ENCODE measurements at regions of chr2 and their contacts with region 1.

Region 1: GRCh38 chr2:200713003-200713703 is 98.6 kb upstream of the BZW1 start:
- DNase-seq: peak; percentile 91
- ATAC-seq: peak; percentile 99
- H3K4me3 ChIP-seq: peak overlapping the region in 4 of 5 experiments; percentile 5 to 52 (median 16)
- H3K4me3 Mint-ChIP-seq: peak overlapping the region; percentile 83
- H3K27ac ChIP-seq: peak overlapping the region; percentile 82 to 93
- H3K27ac Mint-ChIP-seq: peak overlapping the region; percentile 98
- H3K4me1 ChIP-seq: peaks cover 5 to 6% of the 10 kb centered on the region in 2 donors
- H3K4me1 Mint-ChIP-seq: peaks cover 15% of the 10 kb centered on the region
- H3K27me3 ChIP-seq: no peaks in the 10 kb centered on the region
- H3K27me3 Mint-ChIP-seq: peaks cover 10% of the 10 kb centered on the region
- CTCF ChIP-seq: peak; percentile 83

Region 2: DNA sequence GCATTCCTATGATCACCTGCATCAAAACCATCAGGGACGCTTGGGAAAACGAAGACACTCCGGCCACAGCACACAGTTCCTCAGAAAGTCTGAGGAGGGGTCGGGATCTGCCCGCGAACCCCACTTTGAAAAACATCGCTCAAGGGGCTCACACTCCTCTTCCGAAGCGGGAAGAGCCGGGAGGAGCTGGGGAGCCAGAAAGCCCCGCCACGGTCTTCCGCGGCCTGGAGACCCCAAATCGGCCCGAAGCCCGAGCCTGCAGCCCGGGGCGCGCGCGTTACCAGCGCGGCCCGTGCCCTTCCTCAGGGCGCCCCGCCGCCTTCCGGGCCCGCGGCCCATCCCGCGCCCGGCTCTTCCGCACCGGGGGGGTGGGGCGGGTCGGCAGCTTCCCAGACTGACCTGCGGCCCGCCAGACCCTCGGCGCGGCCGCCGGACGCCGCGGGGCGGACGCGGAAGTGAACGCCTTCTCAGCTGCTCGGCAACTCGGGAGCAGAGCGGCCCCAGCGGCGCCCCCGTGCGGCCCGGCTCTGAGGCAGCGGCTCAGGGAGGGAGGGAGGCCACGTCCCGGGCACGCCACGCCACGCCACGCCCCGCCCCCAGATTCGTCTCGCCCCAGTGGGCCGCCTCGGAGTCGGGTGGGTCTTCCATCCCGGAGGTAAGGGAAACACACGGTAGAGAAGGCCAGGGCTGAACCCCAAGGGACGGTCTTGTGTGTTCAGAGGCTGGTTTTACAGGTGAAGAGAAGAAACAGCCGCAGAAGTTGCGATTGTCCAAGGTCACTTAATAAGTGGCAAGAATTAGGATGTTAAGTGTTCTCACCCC is 203.3 kb before region 1 on chr2 and contains the start of gene KCTD18:
- CTCF ChIA-PET with region 1: no interaction called
- POLR2A ChIA-PET with region 1: no interaction called
- intact Hi-C with region 1: loop called (anchors 1 kb)
- DNase-seq: peak; percentile 91
- ATAC-seq: peak; percentile 100
- H3K4me3 ChIP-seq: peak within 1 kb of the TSS; percentile 64 to 81 (median 66)
- H3K4me3 Mint-ChIP-seq: peak within 1 kb of the TSS; percentile 95
- H3K27ac ChIP-seq: peak within 1 kb of the TSS; percentile 49 to 79
- H3K27ac Mint-ChIP-seq: peak within 1 kb of the TSS; percentile 92
- H3K4me1 ChIP-seq: peaks cover 15 to 21% of the 10 kb centered on the region in 2 donors
- H3K4me1 Mint-ChIP-seq: peaks cover 28% of the 10 kb centered on the region
- H3K27me3 ChIP-seq: peaks cover 0 to 13% (median 13%) of the 10 kb centered on the region in 4 experiments
- H3K27me3 Mint-ChIP-seq: peaks cover 4% of the 10 kb centered on the region
- CTCF ChIP-seq: peak; percentile 83
- total RNA-seq, gene KCTD18: 20.2 and 21.3 TPM in 2 replicates

Region 3: DNA sequence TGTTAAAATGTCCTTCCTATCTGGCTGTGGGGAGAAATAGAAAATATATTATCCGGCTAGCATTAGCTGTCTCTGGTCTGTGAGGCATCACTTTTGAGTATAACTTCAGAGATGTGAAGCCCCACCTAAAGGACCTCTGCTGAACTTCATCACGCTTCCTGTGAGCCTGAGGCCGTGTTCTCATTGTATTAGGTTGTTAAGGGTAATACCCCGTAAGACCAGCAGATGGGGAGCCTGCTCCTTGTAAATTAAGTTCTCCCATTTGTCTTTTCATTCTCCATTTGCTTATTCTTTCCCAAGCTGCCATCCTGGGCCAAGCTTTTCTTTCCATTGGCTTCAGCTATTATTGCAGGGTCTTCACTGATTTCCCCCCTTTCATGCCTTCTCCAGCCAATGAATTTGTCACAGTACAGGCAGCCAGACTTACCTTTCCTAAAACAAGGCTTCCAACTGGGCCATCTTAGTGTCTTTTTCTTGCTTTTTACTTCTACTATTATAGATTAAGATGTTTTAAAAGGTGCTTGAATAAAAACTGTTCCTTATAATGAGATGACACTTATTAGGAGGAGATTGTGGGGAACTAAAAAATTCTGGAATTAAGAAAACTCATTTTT is 188.4 kb after region 1 on chr2:
- CTCF ChIA-PET with region 1: interaction called, 7 read pairs
- POLR2A ChIA-PET with region 1: no interaction called
- intact Hi-C with region 1: loop called (anchors 1 kb)
- DNase-seq: peak; percentile 86
- ATAC-seq: peak; percentile 100
- H3K4me3 ChIP-seq: no peak overlapping the region
- H3K4me3 Mint-ChIP-seq: no peak overlapping the region
- H3K27ac ChIP-seq: peak overlapping the region in 1 of 2 donors; percentile 40
- H3K27ac Mint-ChIP-seq: no peak overlapping the region
- H3K4me1 ChIP-seq: no peaks in the 10 kb centered on the region
- H3K4me1 Mint-ChIP-seq: peaks cover 4% of the 10 kb centered on the region
- H3K27me3 ChIP-seq: no peaks in the 10 kb centered on the region
- H3K27me3 Mint-ChIP-seq: no peaks in the 10 kb centered on the region
- CTCF ChIP-seq: peak; percentile 94

Region 4: GRCh38 chr2:201049455-201049854 is 336.3 kb after region 1 on chr2:
- CTCF ChIA-PET with region 1: no interaction called
- POLR2A ChIA-PET with region 1: no interaction called
- intact Hi-C with region 1: no loop called
- DNase-seq: no peak
- ATAC-seq: no peak
- H3K4me3 ChIP-seq: no peak overlapping the region
- H3K4me3 Mint-ChIP-seq: no peak overlapping the region
- H3K27ac ChIP-seq: no peak overlapping the region
- H3K27ac Mint-ChIP-seq: no peak overlapping the region
- H3K4me1 ChIP-seq: no peaks in the 10 kb centered on the region
- H3K4me1 Mint-ChIP-seq: peaks cover 2% of the 10 kb centered on the region
- H3K27me3 ChIP-seq: no peaks in the 10 kb centered on the region
- H3K27me3 Mint-ChIP-seq: no peaks in the 10 kb centered on the region
- CTCF ChIP-seq: no peak

Region 5: DNA sequence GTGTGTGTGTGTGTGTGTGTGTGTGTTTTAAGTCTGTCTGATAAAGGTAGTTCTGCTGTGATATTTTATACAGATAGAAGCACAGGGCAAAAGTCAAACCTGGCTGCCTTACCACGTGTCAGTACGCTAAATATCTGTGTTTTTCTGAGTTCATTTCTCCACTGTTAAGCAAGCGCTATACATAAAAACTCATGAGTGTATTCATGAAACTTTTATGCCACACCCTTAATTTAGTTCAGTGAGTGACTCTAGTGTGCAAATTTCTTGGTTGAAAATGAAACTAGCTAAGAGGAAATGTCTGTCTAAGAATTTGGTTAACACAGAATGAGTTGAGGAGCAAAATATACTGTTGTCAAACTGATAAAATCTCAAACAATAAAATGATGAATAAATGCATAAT is 480.9 kb after region 1 on chr2:
- CTCF ChIA-PET with region 1: no interaction called
- POLR2A ChIA-PET with region 1: no interaction called
- intact Hi-C with region 1: no loop called
- DNase-seq: peak; percentile 76
- ATAC-seq: peak; percentile 96
- H3K4me3 ChIP-seq: peak overlapping the region in 1 of 5 experiments; percentile 29
- H3K4me3 Mint-ChIP-seq: peak overlapping the region; percentile 80
- H3K27ac ChIP-seq: peak overlapping the region; percentile 31 to 50
- H3K27ac Mint-ChIP-seq: peak overlapping the region; percentile 89
- H3K4me1 ChIP-seq: peaks cover 46 to 55% of the 10 kb centered on the region in 2 donors
- H3K4me1 Mint-ChIP-seq: peaks cover 59% of the 10 kb centered on the region
- H3K27me3 ChIP-seq: no peaks in the 10 kb centered on the region
- H3K27me3 Mint-ChIP-seq: no peaks in the 10 kb centered on the region
- CTCF ChIP-seq: no peak

Measured in B cell (primary cell).